ENCODE measurements at regions of chr12 and their contacts with region 1.

Region 1: GRCh38 chr12:91109148-91109564 is 2.1 kb downstream of the LUM start:
- DNase-seq: peak; percentile 70
- H3K4me3 ChIP-seq: no peak overlapping the region
- H3K27ac ChIP-seq: peak overlapping the region; percentile 0 to 51 (median 39)
- H3K4me1 ChIP-seq: no peaks in the 10 kb centered on the region
- H3K27me3 ChIP-seq: no peaks in the 10 kb centered on the region
- CTCF ChIP-seq: peak; percentile 41 to 65 (median 61)
- EP300 ChIP-seq: no peak
- POLR2A ChIP-seq: no peak

Region 2: GRCh38 chr12:90987520-90987919 is 121.6 kb before region 1 on chr12:
- in situ Hi-C with region 1: loop called in 1 of 4 experiments (anchors 10 kb)
- intact Hi-C with region 1: no loop called
- DNase-seq: no peak
- H3K4me3 ChIP-seq: no peak overlapping the region
- H3K27ac ChIP-seq: no peak overlapping the region
- H3K4me1 ChIP-seq: no peaks in the 10 kb centered on the region
- H3K27me3 ChIP-seq: no peaks in the 10 kb centered on the region
- CTCF ChIP-seq: no peak
- EP300 ChIP-seq: no peak
- POLR2A ChIP-seq: no peak

Region 3: DNA sequence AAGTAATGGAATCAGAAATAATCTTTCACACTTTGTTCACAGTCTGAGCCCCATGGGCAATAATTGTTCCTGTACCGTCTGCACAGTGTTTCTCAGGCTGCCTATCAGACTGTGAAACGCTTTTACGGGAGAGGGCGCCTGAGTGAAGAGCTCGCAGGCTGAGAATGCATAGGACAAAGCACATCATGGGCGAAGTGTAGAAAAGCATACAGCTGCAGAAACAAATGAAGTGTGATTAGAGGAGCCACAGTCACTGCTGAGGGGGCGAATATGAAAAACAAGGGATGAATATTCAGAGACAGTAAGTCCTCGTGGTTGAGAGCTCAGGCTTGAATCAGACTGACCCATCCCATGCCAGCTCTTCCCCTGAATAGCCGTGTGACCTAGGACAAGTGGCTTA is 511.8 kb after region 1 on chr12:
- in situ Hi-C with region 1: no loop called
- intact Hi-C with region 1: no loop called
- DNase-seq: no peak
- H3K4me3 ChIP-seq: no peak overlapping the region
- H3K27ac ChIP-seq: no peak overlapping the region
- H3K4me1 ChIP-seq: no peaks in the 10 kb centered on the region
- H3K27me3 ChIP-seq: no peaks in the 10 kb centered on the region
- CTCF ChIP-seq: no peak
- EP300 ChIP-seq: no peak
- POLR2A ChIP-seq: no peak